Adrenal gland (tissue), 19 donors: ENCODE measurements at regions of chr19 and their contacts with region 1.

Region 1: DNA sequence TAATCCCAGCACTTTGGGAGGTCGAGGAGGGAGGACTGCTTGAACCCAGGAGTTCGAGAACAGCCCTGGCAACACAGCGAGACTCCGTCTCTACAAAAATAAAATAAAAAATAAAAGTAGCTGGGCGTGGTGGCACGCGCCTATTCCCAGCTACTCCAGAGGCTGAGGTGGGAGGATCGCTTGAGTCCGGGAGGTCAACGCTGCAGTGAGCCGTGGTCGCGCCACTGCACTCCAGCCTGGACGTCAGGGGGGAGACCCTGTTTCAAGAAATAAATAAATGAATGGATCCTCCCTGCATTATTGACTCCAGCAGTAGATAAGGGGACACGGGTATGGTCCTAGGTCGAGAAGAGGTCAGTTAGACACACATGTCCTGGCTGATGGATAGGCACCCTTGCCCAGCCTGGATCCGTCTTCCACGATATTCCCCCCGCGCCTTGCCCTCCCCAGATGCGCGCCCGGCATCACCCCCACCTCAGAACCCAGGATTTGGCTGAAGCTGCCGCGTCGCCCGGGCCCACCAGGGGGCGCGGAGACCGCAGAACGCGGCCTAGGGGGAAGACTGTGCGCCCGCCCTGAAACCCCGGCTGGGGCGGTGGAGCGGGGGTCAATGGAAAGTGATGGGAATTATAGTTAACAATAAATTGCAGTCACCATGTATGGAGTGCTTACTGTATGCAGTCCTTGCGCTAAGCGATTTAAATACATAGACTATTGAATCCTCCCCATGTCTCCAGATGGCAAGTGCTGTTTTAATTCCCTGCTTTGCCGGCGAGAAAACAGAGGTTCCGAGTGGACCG is 2.1 kb upstream of the HOOK2 start:
- DNase-seq: peak; percentile 77 to 88 (median 82)
- H3K4me3 ChIP-seq: peak overlapping the region in 3 of 4 donors; percentile 34 to 67 (median 38)
- H3K27ac ChIP-seq: peak overlapping the region; percentile 55 to 96 (median 88)
- H3K4me1 ChIP-seq: peaks cover 26 to 39% of the 10 kb centered on the region in 2 donors
- H3K27me3 ChIP-seq: no peaks in the 10 kb centered on the region
- CTCF ChIP-seq: peak; percentile 84 to 95 (median 95)
- POLR2A ChIP-seq: no peak

Region 2: GRCh38 chr19:12793290-12794199 is 16.1 kb after region 1 on chr19:
- intact Hi-C with region 1: loop called (anchors 2 kb)
- DNase-seq: peak; percentile 95 to 97 (median 96)
- H3K4me3 ChIP-seq: peak overlapping the region in 3 of 4 donors; percentile 74 to 80 (median 77)
- H3K27ac ChIP-seq: peak overlapping the region; percentile 93 to 99 (median 98)
- H3K4me1 ChIP-seq: peaks cover 21 to 36% of the 10 kb centered on the region in 2 donors
- H3K27me3 ChIP-seq: no peaks in the 10 kb centered on the region
- CTCF ChIP-seq: peak in 2 of 6 experiments; percentile 1 to 16
- POLR2A ChIP-seq: peak; percentile 84 to 90